ENCODE measurements at regions of chr9 and their contacts with region 1.

Region 1: GRCh38 chr9:91775011-91775707 is 174.9 kb downstream of the ROR2 start:
- DNase-seq: peak; percentile 31
- ATAC-seq: peak; percentile 94
- H3K4me3 ChIP-seq: no peak overlapping the region
- H3K27ac ChIP-seq: no peak overlapping the region
- H3K4me1 ChIP-seq: no peaks in the 10 kb centered on the region
- H3K27me3 ChIP-seq: no peaks in the 10 kb centered on the region
- CTCF ChIP-seq: peak; percentile 81 to 86 (median 83)
- POLR2A ChIP-seq: no peak
- RAD21 ChIP-seq: peak; percentile 90

Region 2: GRCh38 chr9:91266448-91266847 is 508.7 kb before region 1 on chr9:
- CTCF ChIA-PET with region 1: no interaction called
- POLR2A ChIA-PET with region 1: no interaction called
- RAD21 ChIA-PET with region 1: no interaction called
- intact Hi-C with region 1: no loop called
- DNase-seq: no peak
- ATAC-seq: no peak
- H3K4me3 ChIP-seq: no peak overlapping the region
- H3K27ac ChIP-seq: no peak overlapping the region
- H3K4me1 ChIP-seq: no peaks in the 10 kb centered on the region
- H3K27me3 ChIP-seq: no peaks in the 10 kb centered on the region
- CTCF ChIP-seq: no peak
- POLR2A ChIP-seq: no peak
- RAD21 ChIP-seq: no peak

Region 3: GRCh38 chr9:91764661-91765060 is 10.5 kb before region 1 on chr9:
- CTCF ChIA-PET with region 1: no interaction called
- POLR2A ChIA-PET with region 1: no interaction called
- RAD21 ChIA-PET with region 1: no interaction called
- intact Hi-C with region 1: no loop called
- DNase-seq: no peak
- ATAC-seq: no peak
- H3K4me3 ChIP-seq: no peak overlapping the region
- H3K27ac ChIP-seq: no peak overlapping the region
- H3K4me1 ChIP-seq: no peaks in the 10 kb centered on the region
- H3K27me3 ChIP-seq: no peaks in the 10 kb centered on the region
- CTCF ChIP-seq: no peak
- POLR2A ChIP-seq: no peak
- RAD21 ChIP-seq: no peak

Region 4: GRCh38 chr9:91824601-91825305 is 49.6 kb after region 1 on chr9:
- CTCF ChIA-PET with region 1: no interaction called
- POLR2A ChIA-PET with region 1: no interaction called
- RAD21 ChIA-PET with region 1: no interaction called
- intact Hi-C with region 1: no loop called
- DNase-seq: no peak
- ATAC-seq: no peak
- H3K4me3 ChIP-seq: no peak overlapping the region
- H3K27ac ChIP-seq: no peak overlapping the region
- H3K4me1 ChIP-seq: peaks cover 0 to 9% of the 10 kb centered on the region in 2 experiments; a peak in 2 of 4 replicates
- H3K27me3 ChIP-seq: no peaks in the 10 kb centered on the region
- CTCF ChIP-seq: no peak
- POLR2A ChIP-seq: no peak
- RAD21 ChIP-seq: no peak

Region 5: DNA sequence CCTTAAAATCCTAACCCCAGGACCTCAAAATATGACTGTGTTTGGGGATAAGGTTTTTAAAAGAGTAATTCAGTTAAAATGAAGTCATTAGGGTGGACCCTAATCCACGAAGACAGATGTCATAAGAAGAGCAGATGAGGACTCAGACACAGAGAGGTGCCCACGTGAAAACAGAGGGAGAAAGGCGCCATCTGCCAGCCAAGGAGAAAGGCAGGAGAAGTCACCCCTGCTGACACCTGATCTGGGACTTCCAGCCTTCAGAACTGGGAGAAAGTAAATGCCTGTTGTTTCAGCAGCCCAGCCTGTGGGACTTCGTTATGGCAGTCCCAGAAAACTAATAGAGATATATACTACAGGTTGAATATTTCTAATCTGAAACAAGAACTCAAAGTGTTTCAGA is 107.5 kb after region 1 on chr9:
- CTCF ChIA-PET with region 1: no interaction called
- POLR2A ChIA-PET with region 1: no interaction called
- RAD21 ChIA-PET with region 1: no interaction called
- intact Hi-C with region 1: loop called (anchors 1 kb)
- DNase-seq: no peak
- ATAC-seq: no peak
- H3K4me3 ChIP-seq: no peak overlapping the region
- H3K27ac ChIP-seq: no peak overlapping the region
- H3K4me1 ChIP-seq: no peaks in the 10 kb centered on the region
- H3K27me3 ChIP-seq: no peaks in the 10 kb centered on the region
- CTCF ChIP-seq: 0 out of 6 replicates have a peak, but pooled peaks of 1 of the 3 experiments have one; percentile 24
- POLR2A ChIP-seq: no peak
- RAD21 ChIP-seq: peak; percentile 57

Region 6: DNA sequence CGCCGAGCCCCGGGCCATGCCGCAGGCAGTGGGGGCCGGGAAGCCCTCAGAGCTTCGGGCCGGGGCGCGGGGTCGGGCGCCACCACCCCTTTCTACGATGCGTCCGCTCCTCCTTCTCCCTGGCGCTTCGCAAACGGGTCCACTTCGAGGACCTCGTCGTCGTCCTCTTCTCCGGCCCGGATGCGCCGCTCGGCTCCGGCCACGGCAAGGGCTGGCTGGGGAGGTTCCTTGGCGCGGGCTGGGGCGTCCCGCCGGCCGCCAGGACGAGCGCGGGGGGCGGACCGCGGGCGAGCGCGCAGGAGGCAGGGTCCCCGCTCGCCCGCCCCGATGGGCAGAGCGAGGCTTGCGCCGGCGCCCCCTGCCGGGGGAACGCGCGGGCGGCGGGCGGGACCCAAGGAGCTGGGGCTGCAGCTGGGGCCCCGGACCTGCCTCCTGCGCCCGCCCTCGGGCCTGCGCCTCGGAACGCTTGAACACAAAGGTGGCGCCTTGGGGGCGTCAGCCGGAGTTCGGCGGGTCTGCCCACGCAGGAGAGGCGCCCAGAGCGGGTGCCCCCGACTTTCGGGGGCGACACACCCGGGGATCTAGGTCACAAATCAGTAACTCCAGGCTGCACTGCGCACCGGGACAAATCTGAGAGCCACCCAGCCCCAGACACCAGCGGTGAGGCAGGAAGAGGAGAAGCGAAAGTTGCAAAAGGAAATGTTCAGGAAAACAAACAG is 174.9 kb after region 1 on chr9 and contains the start of gene ROR2:
- CTCF ChIA-PET with region 1: interaction called, 9 read pairs
- POLR2A ChIA-PET with region 1: no interaction called
- RAD21 ChIA-PET with region 1: no interaction called
- intact Hi-C with region 1: loop called (anchors 1 kb)
- DNase-seq: peak; percentile 37
- ATAC-seq: peak; percentile 84
- H3K4me3 ChIP-seq: peak within 1 kb of the TSS; percentile 80 to 84
- H3K27ac ChIP-seq: peak within 1 kb of the TSS; percentile 78
- H3K4me1 ChIP-seq: peaks cover 14 to 19% of the 10 kb centered on the region in 2 experiments
- H3K27me3 ChIP-seq: no peaks in the 10 kb centered on the region
- CTCF ChIP-seq: peak; percentile 34 to 61 (median 46); a peak in 4 of 6 replicates
- POLR2A ChIP-seq: no peak
- RAD21 ChIP-seq: peak; percentile 49
- total RNA-seq, gene ROR2: 15.7 TPM

Region 7: GRCh38 chr9:91978739-91979414 is 203.7 kb after region 1 on chr9:
- CTCF ChIA-PET with region 1: no interaction called
- POLR2A ChIA-PET with region 1: no interaction called
- RAD21 ChIA-PET with region 1: interaction called in 1 of 2 experiments, 3 read pairs
- intact Hi-C with region 1: loop called (anchors 1 kb)
- DNase-seq: peak; percentile 26
- ATAC-seq: peak; percentile 94
- H3K4me3 ChIP-seq: no peak overlapping the region
- H3K27ac ChIP-seq: no peak overlapping the region; the same call in 1 of the 2 replicates
- H3K4me1 ChIP-seq: peaks cover 11% of the 10 kb centered on the region in 2 experiments; a peak in 3 of 4 replicates
- H3K27me3 ChIP-seq: no peaks in the 10 kb centered on the region
- CTCF ChIP-seq: peak; percentile 55 to 68 (median 61); a peak in 5 of 6 replicates
- POLR2A ChIP-seq: no peak
- RAD21 ChIP-seq: peak; percentile 71

Region 8: GRCh38 chr9:92097997-92098482 is 322.9 kb after region 1 on chr9:
- CTCF ChIA-PET with region 1: no interaction called
- POLR2A ChIA-PET with region 1: no interaction called
- RAD21 ChIA-PET with region 1: no interaction called
- intact Hi-C with region 1: loop called (anchors 10 kb)
- DNase-seq: peak; percentile 93
- ATAC-seq: peak; percentile 16; the same call in 1 of the 2 replicates
- H3K4me3 ChIP-seq: peak overlapping the region in 1 of 2 experiments; percentile 18; a peak in 1 of 4 replicates
- H3K27ac ChIP-seq: peak overlapping the region; percentile 86; the same call in 1 of the 2 replicates
- H3K4me1 ChIP-seq: peaks cover 58 to 85% of the 10 kb centered on the region in 2 experiments
- H3K27me3 ChIP-seq: no peaks in the 10 kb centered on the region
- CTCF ChIP-seq: no peak
- POLR2A ChIP-seq: peak; percentile 37
- RAD21 ChIP-seq: no peak